CD4-positive, alpha-beta memory T cell (primary cell): ENCODE measurements at regions of chr5 and their contacts with region 1.

Region 1: GRCh38 chr5:174418928-174419796 is 305.2 kb upstream of the MSX2 start:
- DNase-seq: peak; percentile 69 to 80 (median 74)
- H3K4me3 ChIP-seq: no peak overlapping the region
- H3K4me3 Mint-ChIP-seq: peak overlapping the region; percentile 62 to 90 (median 77)
- H3K27ac ChIP-seq: no peak overlapping the region
- H3K27ac Mint-ChIP-seq: peak overlapping the region in 1 of 7 donors; percentile 19
- H3K4me1 ChIP-seq: peaks cover 6% of the 10 kb centered on the region
- H3K4me1 Mint-ChIP-seq: peaks cover 8 to 13% (median 10%) of the 10 kb centered on the region in 4 donors
- H3K27me3 ChIP-seq: no peaks in the 10 kb centered on the region
- H3K27me3 Mint-ChIP-seq: peaks cover 7 to 9% of the 10 kb centered on the region in 2 donors

Region 2: GRCh38 chr5:174431504-174431903 is 12.3 kb after region 1 on chr5:
- CTCF ChIA-PET with region 1: interaction called, 18 read pairs
- POLR2A ChIA-PET with region 1: no interaction called
- intact Hi-C with region 1: no loop called
- DNase-seq: no peak
- H3K4me3 ChIP-seq: no peak overlapping the region
- H3K4me3 Mint-ChIP-seq: peak overlapping the region in 1 of 8 donors; percentile 41
- H3K27ac ChIP-seq: no peak overlapping the region
- H3K27ac Mint-ChIP-seq: no peak overlapping the region
- H3K4me1 ChIP-seq: peaks cover 15% of the 10 kb centered on the region
- H3K4me1 Mint-ChIP-seq: peaks cover 0 to 20% (median 3%) of the 10 kb centered on the region in 4 donors
- H3K27me3 ChIP-seq: no peaks in the 10 kb centered on the region
- H3K27me3 Mint-ChIP-seq: peaks cover 4 to 5% of the 10 kb centered on the region in 2 donors

Region 3: GRCh38 chr5:174464504-174465165 is 45.5 kb after region 1 on chr5:
- CTCF ChIA-PET with region 1: interaction called, 86 read pairs
- POLR2A ChIA-PET with region 1: interaction called, 7 read pairs
- intact Hi-C with region 1: loop called (anchors 1 kb)
- DNase-seq: no peak
- H3K4me3 ChIP-seq: no peak overlapping the region
- H3K4me3 Mint-ChIP-seq: no peak overlapping the region
- H3K27ac ChIP-seq: no peak overlapping the region
- H3K27ac Mint-ChIP-seq: peak overlapping the region in 1 of 7 donors; percentile 39
- H3K4me1 ChIP-seq: peaks cover 5% of the 10 kb centered on the region
- H3K4me1 Mint-ChIP-seq: peaks cover 5 to 21% (median 13%) of the 10 kb centered on the region in 4 donors
- H3K27me3 ChIP-seq: no peaks in the 10 kb centered on the region
- H3K27me3 Mint-ChIP-seq: no peaks in the 10 kb centered on the region

Region 4: GRCh38 chr5:174735498-174736330 is 316.6 kb after region 1 on chr5:
- CTCF ChIA-PET with region 1: no interaction called
- POLR2A ChIA-PET with region 1: no interaction called
- intact Hi-C with region 1: loop called (anchors 1 kb)
- DNase-seq: no peak
- H3K4me3 ChIP-seq: no peak overlapping the region
- H3K4me3 Mint-ChIP-seq: peak overlapping the region in 1 of 8 donors; percentile 27
- H3K27ac ChIP-seq: no peak overlapping the region
- H3K27ac Mint-ChIP-seq: no peak overlapping the region
- H3K4me1 ChIP-seq: no peaks in the 10 kb centered on the region
- H3K4me1 Mint-ChIP-seq: peaks cover 4 to 22% (median 9%) of the 10 kb centered on the region in 4 donors
- H3K27me3 ChIP-seq: peaks cover 26% of the 10 kb centered on the region
- H3K27me3 Mint-ChIP-seq: peaks cover 50 to 52% of the 10 kb centered on the region in 2 donors

Region 5: GRCh38 chr5:174793684-174794328 is 374.6 kb after region 1 on chr5:
- CTCF ChIA-PET with region 1: interaction called, 34 read pairs
- POLR2A ChIA-PET with region 1: interaction called, 4 read pairs
- intact Hi-C with region 1: no loop called
- DNase-seq: peak in 4 of 5 donors; percentile 33 to 45 (median 36)
- H3K4me3 ChIP-seq: no peak overlapping the region
- H3K4me3 Mint-ChIP-seq: no peak overlapping the region
- H3K27ac ChIP-seq: no peak overlapping the region
- H3K27ac Mint-ChIP-seq: no peak overlapping the region
- H3K4me1 ChIP-seq: peaks cover 5% of the 10 kb centered on the region
- H3K4me1 Mint-ChIP-seq: peaks cover 2 to 19% (median 10%) of the 10 kb centered on the region in 4 donors
- H3K27me3 ChIP-seq: peaks cover 9% of the 10 kb centered on the region
- H3K27me3 Mint-ChIP-seq: peaks cover 24 to 25% of the 10 kb centered on the region in 2 donors

Region 6: GRCh38 chr5:176144508-176144907 is 1725.3 kb after region 1 on chr5:
- CTCF ChIA-PET with region 1: no interaction called
- POLR2A ChIA-PET with region 1: no interaction called
- intact Hi-C with region 1: no loop called
- DNase-seq: no peak
- H3K4me3 ChIP-seq: no peak overlapping the region
- H3K4me3 Mint-ChIP-seq: no peak overlapping the region
- H3K27ac ChIP-seq: no peak overlapping the region
- H3K27ac Mint-ChIP-seq: no peak overlapping the region
- H3K4me1 ChIP-seq: no peaks in the 10 kb centered on the region
- H3K4me1 Mint-ChIP-seq: no peaks in the 10 kb centered on the region
- H3K27me3 ChIP-seq: no peaks in the 10 kb centered on the region
- H3K27me3 Mint-ChIP-seq: peaks cover 6 to 22% of the 10 kb centered on the region in 2 donors